IMR-90 (cell line): ENCODE measurements at regions of chr12 and their contacts with region 1.

Region 1: GRCh38 chr12:71746983-71747611 is 7.6 kb upstream of the RAB21 start:
- DNase-seq: peak; percentile 73
- ATAC-seq: peak; percentile 97
- H3K4me3 ChIP-seq: no peak overlapping the region
- H3K27ac ChIP-seq: no peak overlapping the region
- H3K4me1 ChIP-seq: no peaks in the 10 kb centered on the region
- H3K27me3 ChIP-seq: peaks cover 24% of the 10 kb centered on the region
- CTCF ChIP-seq: peak; percentile 88
- POLR2A ChIP-seq: no peak
- RAD21 ChIP-seq: peak; percentile 88

Region 2: DNA sequence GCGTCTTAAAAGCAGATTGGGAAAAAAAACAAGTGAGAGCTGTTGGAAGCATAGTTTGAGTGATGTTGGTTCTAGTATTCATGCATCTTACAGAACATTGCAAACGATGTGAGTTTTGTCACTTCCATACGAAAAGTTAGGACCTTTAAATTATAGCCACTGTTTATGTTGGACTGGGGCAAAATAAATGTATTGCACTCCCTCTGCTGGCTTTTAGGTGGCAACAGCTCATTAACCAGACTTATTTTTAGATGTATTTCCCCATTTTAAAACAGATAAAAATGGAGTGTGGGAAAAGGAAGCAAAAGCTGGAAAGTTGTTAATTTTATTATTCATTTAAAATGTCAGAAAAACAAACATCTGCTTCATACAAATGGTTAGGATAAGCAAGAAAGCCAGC is 195.6 kb before region 1 on chr12:
- CTCF ChIA-PET with region 1: no interaction called
- POLR2A ChIA-PET with region 1: no interaction called
- dilution Hi-C with region 1: no loop called
- in situ Hi-C with region 1: no loop called
- intact Hi-C with region 1: loop called (anchors 10 kb)
- DNase-seq: peak; percentile 15
- ATAC-seq: no peak; the same call in 1 of the 2 replicates
- H3K4me3 ChIP-seq: no peak overlapping the region
- H3K27ac ChIP-seq: no peak overlapping the region
- H3K4me1 ChIP-seq: no peaks in the 10 kb centered on the region
- H3K27me3 ChIP-seq: no peaks in the 10 kb centered on the region
- CTCF ChIP-seq: peak; percentile 53
- POLR2A ChIP-seq: no peak
- RAD21 ChIP-seq: peak; percentile 47

Region 3: DNA sequence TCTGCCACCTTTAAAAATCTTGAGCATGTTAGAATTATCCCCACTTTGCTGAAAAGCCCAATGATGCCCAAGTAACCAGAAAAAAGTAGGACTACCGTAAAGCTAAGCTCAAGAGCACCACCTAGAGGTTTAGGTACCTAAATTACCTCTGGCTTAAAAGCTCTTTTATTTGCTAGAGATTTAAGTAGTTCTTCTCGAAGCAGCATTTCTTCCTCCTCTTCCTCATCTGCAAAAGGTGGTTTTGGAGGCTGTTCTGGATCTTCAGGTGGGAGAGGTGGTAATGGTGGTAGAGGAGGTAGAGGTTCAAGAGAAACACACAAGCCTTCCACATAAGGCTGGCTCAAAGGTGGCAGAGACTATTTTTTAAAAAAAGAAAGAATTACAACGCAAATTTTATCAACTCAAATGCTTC is 110.4 kb before region 1 on chr12:
- CTCF ChIA-PET with region 1: interaction called, 11 read pairs
- POLR2A ChIA-PET with region 1: no interaction called
- dilution Hi-C with region 1: no loop called
- in situ Hi-C with region 1: no loop called
- intact Hi-C with region 1: loop called (anchors 5 kb)
- DNase-seq: peak; percentile 72
- ATAC-seq: peak; percentile 54; the same call in 1 of the 2 replicates
- H3K4me3 ChIP-seq: no peak overlapping the region
- H3K27ac ChIP-seq: no peak overlapping the region
- H3K4me1 ChIP-seq: no peaks in the 10 kb centered on the region
- H3K27me3 ChIP-seq: no peaks in the 10 kb centered on the region
- CTCF ChIP-seq: peak; percentile 57
- POLR2A ChIP-seq: no peak
- RAD21 ChIP-seq: peak; percentile 38

Region 4: DNA sequence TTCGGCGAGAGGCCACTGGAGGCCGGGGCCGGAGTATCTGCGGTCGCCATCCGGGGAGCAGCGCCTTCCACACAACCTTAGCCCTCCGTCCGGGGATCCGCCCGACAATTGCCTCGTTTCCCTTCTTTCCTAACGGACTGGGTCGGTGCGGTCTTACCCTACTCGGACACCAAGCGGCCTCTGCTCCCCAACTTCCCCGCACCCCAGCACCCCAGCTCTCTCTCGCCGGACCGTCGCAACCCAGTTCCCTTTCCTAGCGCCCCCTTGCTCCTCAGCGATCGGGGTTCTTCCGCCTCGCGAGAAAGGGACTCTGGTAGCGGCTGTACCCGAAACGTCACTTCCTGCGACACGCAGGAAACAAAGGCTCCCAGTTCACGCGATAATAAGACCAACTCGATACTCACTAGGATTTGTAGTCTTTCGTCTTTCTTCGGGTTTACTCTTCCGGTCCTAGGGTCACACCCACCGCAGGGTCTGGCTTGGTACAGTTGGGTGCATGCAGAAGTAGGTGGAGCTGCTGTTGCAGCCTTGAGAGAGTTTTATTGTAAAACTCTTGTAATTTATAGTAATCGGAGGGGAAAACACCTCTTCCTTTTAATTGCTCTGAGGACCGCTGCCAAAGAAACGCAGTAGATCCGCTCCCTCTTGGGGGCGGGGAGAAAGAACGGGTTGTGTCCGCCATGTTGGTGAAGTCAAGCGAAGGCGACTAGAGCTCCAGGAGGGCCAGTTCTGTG is 83.4 kb before region 1 on chr12 and contains the start of gene ZFC3H1:
- CTCF ChIA-PET with region 1: interaction called, 10 read pairs
- POLR2A ChIA-PET with region 1: no interaction called
- dilution Hi-C with region 1: no loop called
- in situ Hi-C with region 1: loop called (anchors 10 kb)
- intact Hi-C with region 1: loop called (anchors 5 kb)
- DNase-seq: peak; percentile 100
- ATAC-seq: peak; percentile 91
- H3K4me3 ChIP-seq: peak within 1 kb of the TSS; percentile 68
- H3K27ac ChIP-seq: peak within 1 kb of the TSS; percentile 95
- H3K4me1 ChIP-seq: no peaks in the 10 kb centered on the region
- H3K27me3 ChIP-seq: no peaks in the 10 kb centered on the region
- CTCF ChIP-seq: peak; percentile 43
- POLR2A ChIP-seq: peak; percentile 95
- RAD21 ChIP-seq: no peak
- total RNA-seq, gene ZFC3H1: 16.8 and 28.6 TPM in 2 replicates

Region 5: GRCh38 chr12:71685914-71686665 is 61.0 kb before region 1 on chr12 and contains the start of gene TMEM19:
- CTCF ChIA-PET with region 1: interaction called, 11 read pairs
- POLR2A ChIA-PET with region 1: no interaction called
- dilution Hi-C with region 1: no loop called
- in situ Hi-C with region 1: no loop called
- intact Hi-C with region 1: no loop called
- DNase-seq: peak; percentile 86
- ATAC-seq: peak; percentile 98
- H3K4me3 ChIP-seq: peak within 1 kb of the TSS; percentile 78
- H3K27ac ChIP-seq: peak within 1 kb of the TSS; percentile 81
- H3K4me1 ChIP-seq: peaks cover 1% of the 10 kb centered on the region; the same call in 1 of the 2 replicates
- H3K27me3 ChIP-seq: no peaks in the 10 kb centered on the region
- CTCF ChIP-seq: peak; percentile 42
- POLR2A ChIP-seq: peak; percentile 26; the same call in 1 of the 2 replicates
- RAD21 ChIP-seq: peak; percentile 48
- total RNA-seq, gene TMEM19: 28.7 and 43.9 TPM in 2 replicates